Activated CD8-positive, alpha-beta memory T cell treated with anti-CD3 and anti-CD28 coated beads, Interleukin-2, amount 10 ng/mL, durations not matched to agents 7 days and 5 days (primary cell): ENCODE measurements at regions of chr9 and their contacts with region 1.

Region 1: DNA sequence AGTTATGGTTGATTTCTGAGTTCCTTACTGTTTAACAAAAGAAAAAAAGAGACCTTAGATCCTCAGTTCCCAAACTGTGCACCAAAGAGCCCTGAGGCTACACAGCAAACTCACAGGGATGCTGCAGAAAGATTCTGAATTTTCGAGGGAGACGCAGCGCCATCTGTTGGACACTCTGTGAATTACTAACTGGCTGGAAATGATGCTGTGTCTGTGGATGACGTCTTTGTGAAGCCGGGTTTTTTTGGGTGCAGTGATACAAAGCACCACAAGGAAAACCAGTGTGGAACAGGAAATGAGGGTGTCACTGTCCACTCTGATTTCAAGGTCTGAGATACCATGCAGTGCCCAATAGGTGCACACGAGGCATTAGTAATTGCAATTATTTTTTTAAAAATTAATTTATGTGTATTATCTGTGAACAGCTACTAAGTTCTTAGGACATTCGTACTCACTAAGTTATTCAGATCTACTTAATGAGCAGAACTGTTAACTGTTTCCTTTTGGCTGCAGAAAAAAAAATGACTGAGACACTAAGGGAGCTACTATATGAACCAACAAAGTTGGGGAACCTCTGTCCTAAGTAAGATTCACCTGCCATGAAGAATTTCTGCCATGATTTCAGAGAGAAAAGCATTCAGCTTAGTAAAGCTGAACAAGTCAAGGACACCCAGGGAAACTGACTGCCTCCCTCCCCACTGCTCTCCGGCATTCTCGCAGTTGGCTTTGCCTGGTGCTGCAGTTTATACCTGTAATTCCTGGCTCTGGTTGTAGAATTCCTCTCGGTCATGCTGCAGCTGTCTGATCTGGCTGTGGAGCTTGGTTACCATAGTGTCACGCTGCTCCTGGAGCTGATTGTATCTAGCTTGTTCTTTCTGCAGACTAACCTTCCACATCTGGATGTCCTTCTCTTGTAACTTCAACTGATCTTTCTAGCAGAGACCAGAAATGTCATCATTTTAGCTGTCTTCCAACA is 23.4 kb downstream of the SPACA9 start:
- DNase-seq: peak; percentile 88
- ATAC-seq: peak; percentile 97
- H3K4me3 Mint-ChIP-seq: no peak overlapping the region
- H3K27ac Mint-ChIP-seq: no peak overlapping the region
- H3K4me1 Mint-ChIP-seq: peaks cover 16% of the 10 kb centered on the region
- H3K27me3 Mint-ChIP-seq: no peaks in the 10 kb centered on the region

Region 2: DNA sequence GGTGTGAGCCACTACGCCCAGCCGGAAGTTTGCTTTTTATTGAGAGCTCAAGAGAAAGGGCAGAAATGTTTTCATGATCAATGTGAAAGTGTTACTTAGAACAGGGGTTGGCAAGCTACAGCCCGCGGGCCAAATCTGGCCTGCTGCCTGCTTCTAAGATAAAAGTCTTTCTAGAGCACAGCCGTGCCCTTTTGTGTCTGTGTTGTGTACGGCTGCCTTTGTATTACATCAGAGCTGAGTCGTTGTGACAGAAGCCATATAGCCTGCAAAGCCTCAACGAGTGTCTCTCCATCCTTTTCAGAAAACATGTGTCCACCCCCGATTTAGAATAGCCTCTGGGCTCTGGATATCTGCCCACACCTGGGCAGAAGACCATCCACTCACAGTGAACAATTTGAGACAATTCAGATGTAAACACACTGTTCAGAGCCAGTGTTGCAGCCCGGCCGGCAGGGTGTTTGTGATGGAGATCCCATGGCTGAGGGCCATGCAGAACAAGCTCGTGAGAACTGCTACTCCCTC is 52.9 kb before region 1 on chr9:
- CTCF ChIA-PET with region 1: interaction called, 15 read pairs
- DNase-seq: no peak
- ATAC-seq: no peak
- H3K4me3 Mint-ChIP-seq: peak overlapping the region; percentile 20
- H3K27ac Mint-ChIP-seq: peak overlapping the region; percentile 49
- H3K4me1 Mint-ChIP-seq: peaks cover 24% of the 10 kb centered on the region
- H3K27me3 Mint-ChIP-seq: peaks cover 2% of the 10 kb centered on the region

Region 3: DNA sequence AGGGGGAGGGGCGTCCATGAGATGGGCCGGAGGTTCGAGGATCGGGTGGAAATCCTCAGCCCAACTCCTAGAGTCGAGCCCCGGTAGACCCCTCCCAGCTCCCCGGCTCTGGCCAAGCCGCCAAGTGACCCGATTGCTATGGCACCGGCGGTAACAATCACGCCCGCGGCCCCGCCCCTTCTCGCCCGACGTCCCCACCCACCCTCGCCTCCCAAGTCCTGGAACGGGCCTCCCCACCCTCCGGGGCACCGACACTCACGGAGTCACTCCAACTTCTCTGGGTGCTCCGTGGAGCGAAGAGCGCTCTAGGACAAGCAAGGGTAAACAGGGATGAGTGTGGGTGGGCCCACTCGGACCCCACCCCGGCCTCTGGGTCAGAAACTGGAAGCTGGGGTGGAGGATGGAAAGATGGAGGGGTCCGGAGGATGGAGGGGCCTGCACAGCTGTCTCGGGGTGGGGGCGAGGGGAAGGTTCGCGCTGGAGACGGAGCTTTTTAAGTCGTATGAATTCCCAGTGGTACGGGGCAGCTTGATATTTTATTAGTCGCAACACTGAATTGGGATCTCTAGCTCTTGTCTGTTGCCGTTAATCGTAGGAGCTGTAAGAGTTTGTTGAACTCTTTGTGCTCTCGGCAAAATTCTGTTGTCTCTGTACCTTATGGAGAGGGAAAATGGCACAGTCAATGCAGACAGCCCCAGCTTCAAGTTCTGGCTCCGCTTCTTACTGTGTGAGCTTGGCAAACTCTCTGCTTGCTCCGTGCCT is 23.3 kb before region 1 on chr9 and contains the start of gene SPACA9:
- CTCF ChIA-PET with region 1: interaction called, 10 read pairs
- DNase-seq: no peak
- ATAC-seq: peak; percentile 48
- H3K4me3 Mint-ChIP-seq: peak within 1 kb of the TSS; percentile 70
- H3K27ac Mint-ChIP-seq: peak within 1 kb of the TSS; percentile 70
- H3K4me1 Mint-ChIP-seq: peaks cover 37% of the 10 kb centered on the region
- H3K27me3 Mint-ChIP-seq: peaks cover 21% of the 10 kb centered on the region
- total RNA-seq, gene SPACA9: 1.6 to 2.6 TPM

Region 4: DNA sequence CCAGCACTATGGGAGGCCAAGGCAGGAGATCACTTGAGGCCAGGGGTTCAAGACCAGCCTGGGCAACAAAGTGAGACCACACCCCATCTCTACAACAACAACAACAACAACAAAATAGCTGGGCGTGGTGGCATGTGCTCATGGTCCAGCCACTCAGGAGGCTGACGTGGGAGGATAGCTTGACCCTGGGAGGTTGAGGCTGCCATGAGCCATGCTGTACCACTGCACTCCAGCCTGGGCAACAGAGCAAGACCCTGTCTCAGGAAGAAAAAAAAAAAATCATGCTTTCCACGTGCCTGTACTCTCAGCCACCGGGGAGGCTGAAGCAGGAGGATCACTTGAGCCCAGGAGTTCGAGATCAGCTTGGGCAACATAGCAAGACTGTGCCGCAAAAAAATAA is 12.8 kb after region 1 on chr9:
- CTCF ChIA-PET with region 1: interaction called, 14 read pairs
- DNase-seq: no peak
- ATAC-seq: no peak
- H3K4me3 Mint-ChIP-seq: no peak overlapping the region
- H3K27ac Mint-ChIP-seq: no peak overlapping the region
- H3K4me1 Mint-ChIP-seq: no peaks in the 10 kb centered on the region
- H3K27me3 Mint-ChIP-seq: no peaks in the 10 kb centered on the region